Kidney (tissue), 22 donors: ENCODE measurements at regions of chr7 and their contacts with region 1.

Region 1: GRCh38 chr7:16071246-16071857 is 350.0 kb downstream of the CRPPA start:
- DNase-seq: peak in 2 of 5 donors; percentile 77 to 79
- H3K4me3 ChIP-seq: no peak overlapping the region
- H3K27ac ChIP-seq: no peak overlapping the region
- H3K4me1 ChIP-seq: peaks cover 0 to 2% (median 0%) of the 10 kb centered on the region in 3 donors
- H3K27me3 ChIP-seq: no peaks in the 10 kb centered on the region
- CTCF ChIP-seq: peak; percentile 67

Region 2: GRCh38 chr7:15309872-15310271 is 761.5 kb before region 1 on chr7:
- intact Hi-C with region 1: loop called (anchors 10 kb)
- DNase-seq: no peak
- H3K4me3 ChIP-seq: no peak overlapping the region
- H3K27ac ChIP-seq: no peak overlapping the region
- H3K4me1 ChIP-seq: no peaks in the 10 kb centered on the region
- H3K27me3 ChIP-seq: no peaks in the 10 kb centered on the region
- CTCF ChIP-seq: no peak

Region 3: DNA sequence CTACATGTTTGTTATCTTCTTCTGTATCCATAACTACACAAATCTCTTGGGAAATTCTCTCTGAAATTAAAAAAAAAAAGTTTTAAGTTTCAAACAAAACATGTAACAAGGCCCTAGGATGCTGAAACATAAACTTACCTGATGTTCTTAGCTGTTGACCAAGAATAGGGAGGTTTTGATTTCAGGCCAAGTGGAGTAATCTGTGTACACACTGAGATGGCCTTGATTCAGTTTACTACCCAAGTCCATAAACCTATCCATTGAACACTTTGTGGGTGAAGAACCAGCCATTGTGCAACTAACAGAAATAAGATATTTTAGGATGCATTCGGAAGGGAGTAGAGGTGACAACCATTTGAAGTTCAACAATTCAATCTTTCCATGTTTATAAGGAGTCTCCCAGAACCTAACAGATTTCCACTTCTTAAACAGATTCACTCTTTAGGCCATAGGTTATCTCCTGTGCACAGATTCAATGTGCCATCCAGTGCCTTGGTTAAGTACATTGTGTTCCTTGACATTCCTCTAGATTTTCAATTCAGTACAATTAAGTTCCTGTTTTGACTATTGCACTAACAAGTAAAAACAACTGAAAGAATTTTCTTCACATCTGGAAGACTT is 206.9 kb after region 1 on chr7:
- intact Hi-C with region 1: no loop called
- DNase-seq: no peak
- H3K4me3 ChIP-seq: no peak overlapping the region
- H3K27ac ChIP-seq: no peak overlapping the region
- H3K4me1 ChIP-seq: no peaks in the 10 kb centered on the region
- H3K27me3 ChIP-seq: no peaks in the 10 kb centered on the region
- CTCF ChIP-seq: no peak